ENCODE measurements at regions of chr2 and their contacts with region 1.

Region 1: DNA sequence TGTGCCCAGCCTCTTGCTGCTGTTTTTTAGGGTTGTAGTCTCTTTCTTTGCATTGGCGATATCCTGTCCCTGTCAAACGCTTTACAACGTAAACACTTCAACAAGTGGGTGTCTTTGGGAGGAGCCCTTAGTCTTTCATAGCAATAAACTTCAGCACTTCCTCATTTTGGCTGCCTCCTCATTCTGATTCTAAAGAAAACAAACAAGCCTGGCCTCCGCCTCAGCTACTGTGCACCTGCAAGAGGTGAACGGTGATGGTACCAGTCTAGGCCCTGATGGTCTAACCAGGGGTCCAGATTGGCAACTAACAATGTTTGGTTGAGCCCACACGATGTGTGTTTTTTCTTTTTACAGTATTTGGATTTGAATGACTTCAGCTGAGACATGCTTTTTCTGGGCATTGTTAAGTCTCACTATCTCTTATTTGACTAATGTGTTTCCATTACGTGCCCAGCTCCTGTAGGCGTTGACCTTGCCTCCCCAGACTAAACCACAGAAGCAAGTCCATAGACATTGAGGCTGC is 53.2 kb upstream of the CUL3 start:
- DNase-seq: no peak
- ATAC-seq: peak in 1 of 4 donors; percentile 8
- H3K4me3 ChIP-seq: no peak overlapping the region
- H3K27ac ChIP-seq: no peak overlapping the region
- H3K4me1 ChIP-seq: no peaks in the 10 kb centered on the region
- H3K27me3 ChIP-seq: no peaks in the 10 kb centered on the region
- CTCF ChIP-seq: no peak

Region 2: DNA sequence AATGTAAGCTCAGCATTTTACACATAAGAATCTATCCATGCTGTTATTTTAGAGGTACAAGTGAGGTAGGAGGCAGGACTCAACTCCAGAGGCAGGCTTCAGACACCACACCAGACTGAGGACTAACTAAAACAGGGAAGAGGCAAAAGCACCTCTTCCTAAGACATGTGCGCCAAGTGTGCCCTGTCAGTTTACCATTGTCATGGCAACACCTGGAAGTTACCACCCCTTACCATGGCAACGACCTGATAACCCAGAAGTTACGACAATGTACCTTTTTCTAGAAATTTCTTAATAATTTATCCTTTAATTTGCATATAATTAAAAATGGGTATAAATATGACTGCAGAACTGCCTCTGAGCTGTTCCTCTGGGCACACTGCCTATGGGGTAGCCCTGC is 396.6 kb before region 1 on chr2:
- intact Hi-C with region 1: no loop called
- DNase-seq: no peak
- ATAC-seq: no peak
- H3K4me3 ChIP-seq: no peak overlapping the region
- H3K27ac ChIP-seq: no peak overlapping the region
- H3K4me1 ChIP-seq: no peaks in the 10 kb centered on the region
- H3K27me3 ChIP-seq: no peaks in the 10 kb centered on the region
- CTCF ChIP-seq: no peak

Region 3: GRCh38 chr2:224369028-224369632 is 269.2 kb before region 1 on chr2:
- intact Hi-C with region 1: loop called in 1 of 3 experiments (anchors 10 kb)
- DNase-seq: no peak
- ATAC-seq: peak in 3 of 4 donors; percentile 49 to 72 (median 67)
- H3K4me3 ChIP-seq: no peak overlapping the region
- H3K27ac ChIP-seq: no peak overlapping the region
- H3K4me1 ChIP-seq: no peaks in the 10 kb centered on the region
- H3K27me3 ChIP-seq: no peaks in the 10 kb centered on the region
- CTCF ChIP-seq: peak; percentile 22 to 49 (median 46)

Region 4: DNA sequence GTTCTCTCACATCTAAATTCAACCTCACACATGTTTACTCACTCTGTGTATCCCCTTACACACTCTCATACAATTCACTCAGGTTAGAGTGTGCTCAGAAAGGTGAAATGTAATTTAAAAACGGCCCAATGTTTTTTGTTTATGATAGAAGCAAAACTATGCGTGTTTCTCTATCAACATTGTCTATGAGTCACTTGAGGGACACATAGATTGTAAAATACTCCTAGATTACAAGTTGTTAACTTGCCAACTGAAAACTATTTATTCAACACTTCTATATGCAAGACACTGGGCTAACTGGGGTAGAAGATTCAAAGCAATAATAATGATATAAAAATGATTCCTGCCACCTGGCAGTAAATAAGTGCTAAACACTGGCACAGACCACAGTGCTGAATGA is 53.2 kb after region 1 on chr2:
- intact Hi-C with region 1: no loop called
- DNase-seq: no peak
- ATAC-seq: no peak
- H3K4me3 ChIP-seq: no peak overlapping the region
- H3K27ac ChIP-seq: no peak overlapping the region
- H3K4me1 ChIP-seq: no peaks in the 10 kb centered on the region
- H3K27me3 ChIP-seq: peaks cover 0 to 2% (median 0%) of the 10 kb centered on the region in 4 donors
- CTCF ChIP-seq: no peak